GM12878 (cell line): ENCODE measurements at regions of chr4 and their contacts with region 1.

Region 1: DNA sequence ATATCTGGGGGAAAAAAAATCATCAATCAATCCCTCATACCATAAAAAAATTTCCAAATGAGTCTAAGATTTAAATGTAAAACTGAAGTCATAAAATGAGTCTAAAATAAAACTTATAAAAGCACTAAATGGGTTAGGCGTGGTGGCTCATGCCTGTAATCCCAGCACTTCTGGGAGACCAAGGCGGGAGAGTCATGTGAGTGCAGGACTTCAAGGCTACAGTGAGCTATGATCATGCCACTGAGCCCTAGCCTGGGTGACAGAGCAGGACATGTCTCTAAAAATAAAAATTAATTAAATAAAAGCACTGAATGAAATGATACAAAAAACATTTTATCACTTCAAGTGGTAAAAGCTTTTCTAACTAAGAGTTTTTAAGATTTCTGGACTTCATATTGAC is 83.3 kb downstream of the LRBA start:
- DNase-seq: no peak
- ATAC-seq: no peak
- H3K4me3 ChIP-seq: no peak overlapping the region
- H3K27ac ChIP-seq: no peak overlapping the region
- H3K4me1 ChIP-seq: no peaks in the 10 kb centered on the region
- H3K27me3 ChIP-seq: no peaks in the 10 kb centered on the region
- CTCF ChIP-seq: no peak
- EP300 ChIP-seq: no peak
- POLR2A ChIP-seq: no peak
- RAD21 ChIP-seq: no peak

Region 2: DNA sequence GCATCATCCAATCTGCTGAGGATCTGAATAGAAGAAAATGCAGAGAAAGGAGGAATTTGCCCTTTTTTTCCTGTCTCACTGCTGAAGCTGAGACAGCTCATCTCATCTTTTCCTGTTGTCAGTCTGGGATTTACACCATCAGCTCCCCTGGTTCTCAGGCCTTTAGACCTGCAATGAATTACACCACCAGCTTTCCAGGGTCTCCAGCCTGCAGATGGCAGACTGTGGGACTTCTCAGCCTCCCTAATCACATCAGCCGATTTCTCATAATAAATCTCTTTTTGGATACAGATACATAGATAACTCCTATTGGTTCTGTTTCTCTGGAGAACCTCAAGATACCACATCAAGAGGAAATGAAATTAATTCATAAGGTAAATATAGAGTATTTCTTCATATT is 484.4 kb before region 1 on chr4:
- CTCF ChIA-PET with region 1: no interaction called
- POLR2A ChIA-PET with region 1: no interaction called
- RAD21 ChIA-PET with region 1: no interaction called
- SMC1A ChIA-PET with region 1: no interaction called
- in situ Hi-C with region 1: no loop called
- intact Hi-C with region 1: no loop called
- DNase-seq: no peak
- ATAC-seq: no peak
- H3K4me3 ChIP-seq: no peak overlapping the region
- H3K27ac ChIP-seq: no peak overlapping the region
- H3K4me1 ChIP-seq: no peaks in the 10 kb centered on the region
- H3K27me3 ChIP-seq: no peaks in the 10 kb centered on the region
- CTCF ChIP-seq: no peak
- EP300 ChIP-seq: no peak
- POLR2A ChIP-seq: no peak
- RAD21 ChIP-seq: no peak

Region 3: DNA sequence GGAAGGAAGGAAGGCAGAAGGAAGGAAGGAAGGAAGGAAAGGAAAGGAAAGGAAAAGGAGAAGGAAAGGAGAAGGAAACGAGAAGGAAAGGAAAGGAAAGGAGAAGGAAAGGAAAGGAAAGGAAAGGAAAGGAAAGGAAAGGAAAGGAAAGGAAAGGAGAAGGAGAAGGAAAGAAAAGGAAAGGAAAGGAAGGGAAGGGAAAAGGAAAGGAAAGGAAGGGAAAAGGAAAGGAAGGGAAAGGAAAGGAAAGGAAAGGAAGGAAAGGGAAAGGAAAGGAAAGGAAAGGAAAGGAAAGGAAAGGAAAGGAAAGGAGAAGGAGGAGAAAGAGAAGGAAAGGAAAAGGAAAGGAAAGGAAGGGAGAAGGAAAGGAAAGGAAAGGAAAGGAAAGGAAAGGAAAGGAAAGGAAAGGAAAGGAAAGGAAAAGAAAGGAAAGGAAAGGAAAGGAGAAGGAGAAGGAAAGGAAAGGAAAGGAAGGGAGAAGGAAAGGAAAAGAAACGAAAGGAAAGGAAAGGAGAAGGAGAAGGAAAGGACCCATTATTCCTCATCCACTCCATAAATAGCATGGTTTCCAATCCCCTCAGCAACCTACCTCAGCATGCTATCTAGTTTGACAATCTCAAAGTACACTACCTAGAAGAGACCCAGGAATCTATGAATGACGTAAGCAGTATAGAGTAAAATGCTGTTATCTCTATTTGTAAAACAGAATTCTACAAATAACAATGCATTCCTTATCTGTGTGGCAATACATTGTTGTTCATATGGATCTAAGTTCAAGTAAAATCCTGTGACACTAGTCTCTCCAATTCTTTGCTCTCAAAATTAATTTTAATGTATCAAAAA is 126.4 kb before region 1 on chr4:
- CTCF ChIA-PET with region 1: no interaction called
- POLR2A ChIA-PET with region 1: no interaction called
- RAD21 ChIA-PET with region 1: no interaction called
- SMC1A ChIA-PET with region 1: no interaction called
- in situ Hi-C with region 1: no loop called
- intact Hi-C with region 1: no loop called
- DNase-seq: no peak
- ATAC-seq: no peak
- H3K4me3 ChIP-seq: no peak overlapping the region
- H3K27ac ChIP-seq: no peak overlapping the region
- H3K4me1 ChIP-seq: no peaks in the 10 kb centered on the region
- H3K27me3 ChIP-seq: no peaks in the 10 kb centered on the region
- CTCF ChIP-seq: no peak
- EP300 ChIP-seq: no peak
- POLR2A ChIP-seq: no peak
- RAD21 ChIP-seq: no peak

Region 4: GRCh38 chr4:150852216-150852615 is 79.6 kb before region 1 on chr4:
- CTCF ChIA-PET with region 1: no interaction called
- POLR2A ChIA-PET with region 1: no interaction called
- RAD21 ChIA-PET with region 1: no interaction called
- SMC1A ChIA-PET with region 1: no interaction called
- in situ Hi-C with region 1: no loop called
- intact Hi-C with region 1: no loop called
- DNase-seq: no peak
- ATAC-seq: no peak
- H3K4me3 ChIP-seq: no peak overlapping the region
- H3K27ac ChIP-seq: no peak overlapping the region
- H3K4me1 ChIP-seq: no peaks in the 10 kb centered on the region
- H3K27me3 ChIP-seq: no peaks in the 10 kb centered on the region
- CTCF ChIP-seq: no peak
- EP300 ChIP-seq: no peak
- POLR2A ChIP-seq: no peak
- RAD21 ChIP-seq: no peak

Region 5: GRCh38 chr4:150943818-150944217 is 12.0 kb after region 1 on chr4:
- CTCF ChIA-PET with region 1: interaction called, 3 read pairs
- POLR2A ChIA-PET with region 1: interaction called, 3 read pairs
- RAD21 ChIA-PET with region 1: interaction called, 4 read pairs
- SMC1A ChIA-PET with region 1: interaction called, 17 read pairs
- in situ Hi-C with region 1: no loop called
- intact Hi-C with region 1: no loop called
- DNase-seq: no peak
- ATAC-seq: peak; percentile 68
- H3K4me3 ChIP-seq: no peak overlapping the region
- H3K27ac ChIP-seq: no peak overlapping the region
- H3K4me1 ChIP-seq: 0 out of 2 replicates have a peak, but pooled peaks cover 4% of the 10 kb centered on the region
- H3K27me3 ChIP-seq: no peaks in the 10 kb centered on the region
- CTCF ChIP-seq: no peak
- EP300 ChIP-seq: no peak
- POLR2A ChIP-seq: no peak
- RAD21 ChIP-seq: no peak

Region 6: GRCh38 chr4:150950657-150951288 is 19.0 kb after region 1 on chr4:
- CTCF ChIA-PET with region 1: interaction called, 3 read pairs
- POLR2A ChIA-PET with region 1: interaction called, 4 read pairs
- RAD21 ChIA-PET with region 1: no interaction called
- SMC1A ChIA-PET with region 1: interaction called, 17 read pairs
- in situ Hi-C with region 1: no loop called
- intact Hi-C with region 1: no loop called
- DNase-seq: no peak
- ATAC-seq: peak; percentile 91
- H3K4me3 ChIP-seq: peak overlapping the region; percentile 11; the same call in 1 of the 2 replicates
- H3K27ac ChIP-seq: peak overlapping the region; percentile 30
- H3K4me1 ChIP-seq: peaks cover 15% of the 10 kb centered on the region
- H3K27me3 ChIP-seq: no peaks in the 10 kb centered on the region
- CTCF ChIP-seq: no peak
- EP300 ChIP-seq: no peak
- POLR2A ChIP-seq: no peak
- RAD21 ChIP-seq: no peak

Region 7: GRCh38 chr4:151227731-151228130 is 295.9 kb after region 1 on chr4:
- CTCF ChIA-PET with region 1: no interaction called
- POLR2A ChIA-PET with region 1: no interaction called
- RAD21 ChIA-PET with region 1: no interaction called
- SMC1A ChIA-PET with region 1: no interaction called
- in situ Hi-C with region 1: no loop called
- intact Hi-C with region 1: no loop called
- DNase-seq: no peak
- ATAC-seq: peak; percentile 30; the same call in 2 of the 3 replicates
- H3K4me3 ChIP-seq: no peak overlapping the region
- H3K27ac ChIP-seq: no peak overlapping the region
- H3K4me1 ChIP-seq: no peaks in the 10 kb centered on the region
- H3K27me3 ChIP-seq: no peaks in the 10 kb centered on the region; a peak in 1 of 4 replicates
- CTCF ChIP-seq: no peak
- EP300 ChIP-seq: no peak
- POLR2A ChIP-seq: no peak
- RAD21 ChIP-seq: no peak